GM12878 (cell line): ENCODE measurements at regions of chr9 and their contacts with region 1.

Region 1: DNA sequence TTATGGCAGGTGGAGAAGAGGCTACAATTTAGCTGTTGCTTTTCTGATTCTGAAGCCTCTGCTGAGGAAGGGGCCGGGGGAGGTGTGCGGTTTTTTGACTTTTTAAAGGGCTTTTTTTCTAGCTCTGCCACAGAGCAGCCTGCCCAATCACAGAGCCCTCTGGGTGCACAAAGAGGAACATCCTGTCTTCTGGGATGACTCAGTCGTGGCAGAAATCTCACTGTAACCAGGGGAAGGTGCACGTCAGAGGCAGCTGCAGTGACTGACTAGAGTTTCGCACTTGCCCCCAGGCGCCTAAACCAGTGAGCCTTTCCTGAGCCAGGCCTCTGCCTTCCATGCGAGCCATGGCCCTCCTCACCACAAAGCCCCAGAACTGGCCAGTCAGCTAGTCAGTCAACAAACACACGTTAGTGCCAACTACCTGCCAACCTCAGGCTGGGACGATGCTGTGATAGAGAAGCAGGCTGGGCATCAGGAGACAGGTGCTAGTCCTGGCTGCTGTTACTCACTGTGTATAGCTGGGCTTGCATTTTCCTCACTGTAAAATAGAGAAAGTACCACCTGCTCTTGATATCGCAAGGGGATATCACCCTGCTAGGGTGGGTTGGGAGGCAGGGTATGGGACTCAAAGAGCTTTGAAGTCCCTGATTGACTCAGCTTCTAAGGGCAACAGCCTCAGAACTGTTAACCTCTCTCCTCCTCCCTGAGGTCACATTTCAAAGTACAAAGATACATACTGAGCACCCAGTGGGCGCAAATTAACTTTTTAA is 2.2 kb downstream of the AKNA start:
- DNase-seq: peak; percentile 97
- ATAC-seq: peak; percentile 74
- H3K4me3 ChIP-seq: peak overlapping the region; percentile 93
- H3K27ac ChIP-seq: peak overlapping the region; percentile 100
- H3K4me1 ChIP-seq: peaks cover 66% of the 10 kb centered on the region
- H3K27me3 ChIP-seq: no peaks in the 10 kb centered on the region
- CTCF ChIP-seq: no peak; a peak in 1 of 6 replicates
- EP300 ChIP-seq: peak; percentile 90 to 95
- POLR2A ChIP-seq: peak; percentile 90
- RAD21 ChIP-seq: no peak

Region 2: GRCh38 chr9:113632776-113633590 is 752.6 kb before region 1 on chr9:
- CTCF ChIA-PET with region 1: no interaction called
- POLR2A ChIA-PET with region 1: no interaction called
- RAD21 ChIA-PET with region 1: no interaction called
- SMC1A ChIA-PET with region 1: no interaction called
- in situ Hi-C with region 1: no loop called
- intact Hi-C with region 1: no loop called
- DNase-seq: no peak
- ATAC-seq: no peak
- H3K4me3 ChIP-seq: no peak overlapping the region
- H3K27ac ChIP-seq: no peak overlapping the region
- H3K4me1 ChIP-seq: no peaks in the 10 kb centered on the region
- H3K27me3 ChIP-seq: no peaks in the 10 kb centered on the region; a peak in 1 of 4 replicates
- CTCF ChIP-seq: no peak
- EP300 ChIP-seq: no peak
- POLR2A ChIP-seq: no peak
- RAD21 ChIP-seq: no peak

Region 3: DNA sequence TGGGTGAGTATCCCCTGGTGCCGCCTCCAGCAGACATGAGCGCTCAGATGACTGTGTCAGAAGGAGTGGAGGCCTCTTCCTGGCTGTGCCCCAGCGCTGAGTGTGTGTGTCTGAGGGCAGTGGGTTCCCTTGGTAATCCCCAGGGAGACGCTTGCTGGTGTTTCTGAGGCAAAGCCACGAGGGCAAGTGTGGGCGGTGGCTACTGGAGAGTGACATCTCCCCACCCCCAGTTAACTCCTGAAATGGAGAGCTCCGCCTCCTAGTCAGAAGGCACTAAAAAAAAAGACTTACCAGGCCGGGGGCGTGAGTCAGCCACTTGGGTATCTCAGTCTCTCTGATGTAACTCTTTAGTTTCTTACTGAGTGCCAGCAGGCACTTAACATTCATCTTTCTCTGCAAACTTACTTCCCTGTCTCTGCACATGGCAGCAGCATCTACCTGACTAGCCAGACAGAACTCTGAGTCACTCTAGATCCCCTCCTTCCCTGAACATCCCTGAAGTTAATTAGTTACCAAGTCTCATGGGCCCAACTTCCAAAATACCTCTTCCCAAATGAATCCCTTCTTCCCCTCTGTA is 36.6 kb before region 1 on chr9:
- CTCF ChIA-PET with region 1: interaction called, 18 read pairs
- POLR2A ChIA-PET with region 1: interaction called, 26 read pairs
- RAD21 ChIA-PET with region 1: interaction called, 29 read pairs
- SMC1A ChIA-PET with region 1: interaction called, 20 read pairs
- in situ Hi-C with region 1: no loop called
- intact Hi-C with region 1: loop called (anchors 2 kb)
- DNase-seq: peak; percentile 94
- ATAC-seq: peak; percentile 96
- H3K4me3 ChIP-seq: no peak overlapping the region
- H3K27ac ChIP-seq: peak overlapping the region; percentile 29
- H3K4me1 ChIP-seq: peaks cover 25% of the 10 kb centered on the region
- H3K27me3 ChIP-seq: no peaks in the 10 kb centered on the region
- CTCF ChIP-seq: no peak
- EP300 ChIP-seq: peak; percentile 65 to 75
- POLR2A ChIP-seq: peak; percentile 59; the same call in 1 of the 2 replicates
- RAD21 ChIP-seq: no peak

Region 4: GRCh38 chr9:114372921-114373448 is 12.6 kb before region 1 on chr9:
- CTCF ChIA-PET with region 1: interaction called, 108 read pairs
- POLR2A ChIA-PET with region 1: interaction called, 312 read pairs
- RAD21 ChIA-PET with region 1: interaction called, 251 read pairs
- SMC1A ChIA-PET with region 1: interaction called, 327 read pairs
- in situ Hi-C with region 1: no loop called
- intact Hi-C with region 1: loop called (anchors 1 kb)
- DNase-seq: peak; percentile 93
- ATAC-seq: peak; percentile 96
- H3K4me3 ChIP-seq: peak overlapping the region; percentile 33; the same call in 1 of the 2 replicates
- H3K27ac ChIP-seq: peak overlapping the region; percentile 99
- H3K4me1 ChIP-seq: peaks cover 62% of the 10 kb centered on the region
- H3K27me3 ChIP-seq: no peaks in the 10 kb centered on the region
- CTCF ChIP-seq: peak in 2 of 3 experiments; percentile 0 to 28; a peak in 2 of 6 replicates
- EP300 ChIP-seq: peak; percentile 72 to 86
- POLR2A ChIP-seq: peak; percentile 83
- RAD21 ChIP-seq: peak; percentile 25; the same call in 1 of the 2 replicates

Region 5: GRCh38 chr9:114405294-114406034 is 19.9 kb after region 1 on chr9:
- CTCF ChIA-PET with region 1: interaction called, 11 read pairs
- POLR2A ChIA-PET with region 1: interaction called, 5 read pairs
- RAD21 ChIA-PET with region 1: interaction called, 136 read pairs
- SMC1A ChIA-PET with region 1: interaction called, 7 read pairs
- in situ Hi-C with region 1: no loop called
- intact Hi-C with region 1: no loop called
- DNase-seq: no peak
- ATAC-seq: peak; percentile 98
- H3K4me3 ChIP-seq: no peak overlapping the region
- H3K27ac ChIP-seq: no peak overlapping the region
- H3K4me1 ChIP-seq: peaks cover 5% of the 10 kb centered on the region; the same call in 1 of the 2 replicates
- H3K27me3 ChIP-seq: no peaks in the 10 kb centered on the region; a peak in 1 of 4 replicates
- CTCF ChIP-seq: peak; percentile 76 to 93 (median 84)
- EP300 ChIP-seq: no peak
- POLR2A ChIP-seq: no peak
- RAD21 ChIP-seq: peak; percentile 91

Region 6: DNA sequence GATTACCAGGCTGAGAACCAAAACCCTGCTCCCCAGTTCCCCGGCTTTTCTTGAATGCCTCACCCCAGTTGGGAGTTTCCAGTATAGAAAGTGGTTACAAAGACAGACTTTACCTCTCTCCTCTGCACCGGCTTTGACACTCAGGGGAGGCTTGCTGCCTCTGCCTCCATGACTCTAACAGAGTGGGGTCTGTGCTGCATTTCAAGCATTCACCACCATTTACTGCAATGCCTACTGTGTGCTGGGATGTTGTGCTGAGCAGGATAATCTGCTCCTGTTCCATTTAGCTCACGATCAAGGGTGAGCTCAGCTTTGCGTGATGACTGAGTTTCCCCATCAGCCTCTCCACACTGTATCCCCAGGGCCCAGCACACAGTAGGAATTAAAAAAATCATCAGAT is 42.0 kb after region 1 on chr9:
- CTCF ChIA-PET with region 1: no interaction called
- POLR2A ChIA-PET with region 1: no interaction called
- RAD21 ChIA-PET with region 1: no interaction called
- SMC1A ChIA-PET with region 1: no interaction called
- in situ Hi-C with region 1: no loop called
- intact Hi-C with region 1: no loop called
- DNase-seq: no peak
- ATAC-seq: no peak
- H3K4me3 ChIP-seq: no peak overlapping the region
- H3K27ac ChIP-seq: no peak overlapping the region
- H3K4me1 ChIP-seq: no peaks in the 10 kb centered on the region
- H3K27me3 ChIP-seq: no peaks in the 10 kb centered on the region
- CTCF ChIP-seq: no peak
- EP300 ChIP-seq: no peak
- POLR2A ChIP-seq: no peak
- RAD21 ChIP-seq: no peak

Region 7: GRCh38 chr9:114611516-114612271 is 226.1 kb after region 1 on chr9:
- CTCF ChIA-PET with region 1: interaction called, 4 read pairs
- POLR2A ChIA-PET with region 1: interaction called, 19 read pairs
- RAD21 ChIA-PET with region 1: interaction called, 5 read pairs
- SMC1A ChIA-PET with region 1: interaction called, 4 read pairs
- in situ Hi-C with region 1: loop called (anchors 5 kb)
- intact Hi-C with region 1: loop called (anchors 5 kb)
- DNase-seq: no peak
- ATAC-seq: peak; percentile 20
- H3K4me3 ChIP-seq: peak overlapping the region; percentile 95
- H3K27ac ChIP-seq: peak overlapping the region; percentile 98
- H3K4me1 ChIP-seq: peaks cover 63% of the 10 kb centered on the region
- H3K27me3 ChIP-seq: no peaks in the 10 kb centered on the region
- CTCF ChIP-seq: no peak
- EP300 ChIP-seq: no peak
- POLR2A ChIP-seq: peak; percentile 63
- RAD21 ChIP-seq: no peak